ENCODE measurements at regions of chr11 and their contacts with region 1.

Region 1: GRCh38 chr11:1882519-1883238 is 9.0 kb downstream of the PRR33 start:
- DNase-seq: peak; percentile 49
- ATAC-seq: peak; percentile 91
- H3K4me3 ChIP-seq: no peak overlapping the region
- H3K27ac ChIP-seq: no peak overlapping the region
- H3K4me1 ChIP-seq: peaks cover 17% of the 10 kb centered on the region
- H3K27me3 ChIP-seq: peaks cover 8 to 59% of the 10 kb centered on the region in 2 experiments
- CTCF ChIP-seq: peak; percentile 97
- EP300 ChIP-seq: no peak
- POLR2A ChIP-seq: no peak
- RAD21 ChIP-seq: peak; percentile 93

Region 2: DNA sequence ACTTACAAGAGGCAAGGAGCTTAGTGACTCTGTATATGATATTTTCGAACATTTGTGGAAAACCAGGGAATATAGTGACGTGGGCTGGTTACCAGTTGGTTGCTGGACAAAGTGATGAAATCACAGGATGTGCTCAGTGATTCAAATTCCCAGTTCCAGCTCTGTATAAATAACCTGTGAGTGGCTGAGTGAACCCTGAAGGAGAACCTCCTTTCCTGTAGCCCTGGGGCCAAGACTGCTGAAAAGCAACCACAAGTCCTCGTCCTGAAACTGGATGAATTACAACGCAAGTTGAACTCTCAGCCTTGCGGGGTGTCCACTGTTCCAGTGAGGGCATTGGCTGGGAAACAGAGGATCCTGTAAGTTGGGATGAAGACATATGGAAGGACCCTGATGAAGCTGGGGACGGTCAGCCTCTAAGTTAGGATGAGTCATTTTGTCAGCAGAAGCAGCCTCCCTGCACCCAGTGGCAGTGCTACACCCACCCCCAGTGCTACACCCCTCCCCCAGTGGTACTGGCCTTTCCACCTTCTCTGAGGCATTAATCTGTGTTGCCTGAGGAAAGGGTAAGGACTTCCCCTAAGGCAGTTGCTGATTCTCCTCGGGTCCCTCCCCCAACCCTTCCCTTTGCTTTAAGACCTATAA is 472.4 kb after region 1 on chr11:
- CTCF ChIA-PET with region 1: no interaction called
- POLR2A ChIA-PET with region 1: no interaction called
- in situ Hi-C with region 1: no loop called
- intact Hi-C with region 1: loop called (anchors 5 kb)
- DNase-seq: no peak
- ATAC-seq: no peak
- H3K4me3 ChIP-seq: no peak overlapping the region
- H3K27ac ChIP-seq: no peak overlapping the region
- H3K4me1 ChIP-seq: no peaks in the 10 kb centered on the region
- H3K27me3 ChIP-seq: peaks cover 11 to 71% of the 10 kb centered on the region in 2 experiments
- CTCF ChIP-seq: no peak
- EP300 ChIP-seq: no peak
- POLR2A ChIP-seq: no peak
- RAD21 ChIP-seq: no peak